Activated CD8-positive, alpha-beta T cell treated with anti-CD3 and anti-CD28 coated beads for 36 hours (primary cell): ENCODE measurements at regions of chr15 and their contacts with region 1.

Region 1: DNA sequence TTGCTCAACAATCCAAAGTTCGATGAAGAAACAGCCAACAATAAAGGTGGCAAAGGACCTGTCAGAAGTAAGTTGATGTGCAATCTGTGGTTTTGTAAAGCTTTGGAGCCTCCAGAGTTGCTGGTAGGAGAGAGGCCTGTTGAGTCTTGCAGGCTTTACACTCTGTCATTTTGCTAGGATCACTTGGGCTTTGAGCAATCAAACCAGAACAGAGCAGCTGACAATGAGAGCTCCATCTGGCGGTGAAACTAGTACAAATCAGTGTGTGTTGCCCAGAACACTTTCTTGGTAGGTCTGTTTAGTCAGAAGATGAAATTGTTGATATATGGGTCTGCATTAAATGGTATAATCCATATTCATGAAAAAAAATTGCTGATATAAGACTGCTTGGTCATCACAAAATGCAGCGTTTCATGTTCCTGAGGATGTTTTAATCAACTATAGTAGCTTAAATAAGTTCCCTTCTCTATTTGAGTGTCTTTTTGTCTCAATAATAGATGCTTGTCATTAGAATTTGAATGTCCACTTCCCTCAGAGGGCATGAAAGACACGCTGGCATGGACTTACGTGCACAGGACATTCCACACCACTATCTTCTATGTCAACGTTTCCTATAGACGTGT is 25.7 kb downstream of the TMOD2 start:
- DNase-seq: peak; percentile 77
- ATAC-seq: peak; percentile 77
- H3K4me3 Mint-ChIP-seq: no peak overlapping the region
- H3K27ac Mint-ChIP-seq: no peak overlapping the region
- H3K4me1 Mint-ChIP-seq: peaks cover 6% of the 10 kb centered on the region
- H3K27me3 Mint-ChIP-seq: no peaks in the 10 kb centered on the region
- CTCF ChIP-seq: peak; percentile 64

Region 2: DNA sequence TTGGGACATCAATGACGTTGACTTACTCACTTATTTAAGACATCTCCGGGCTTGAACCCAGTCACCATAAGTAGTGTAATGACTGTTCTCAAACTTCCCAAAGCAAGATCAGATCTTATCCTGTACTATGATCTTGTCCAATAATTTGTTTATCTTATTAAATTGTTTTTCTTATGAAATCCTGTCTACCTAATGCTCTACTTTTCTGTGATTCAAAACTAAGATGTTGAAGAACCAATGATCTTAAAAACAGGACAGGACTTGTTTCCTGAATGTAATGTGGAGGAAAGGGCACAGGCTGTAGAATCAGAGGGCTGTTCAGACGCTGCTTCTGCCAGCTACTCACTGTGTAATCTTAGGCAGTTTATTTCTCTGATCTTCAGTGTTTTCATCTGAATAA is 134.4 kb before region 1 on chr15:
- CTCF ChIA-PET with region 1: interaction called, 28 read pairs
- POLR2A ChIA-PET with region 1: no interaction called
- intact Hi-C with region 1: no loop called
- DNase-seq: no peak
- ATAC-seq: no peak
- H3K4me3 Mint-ChIP-seq: no peak overlapping the region
- H3K27ac Mint-ChIP-seq: no peak overlapping the region
- H3K4me1 Mint-ChIP-seq: no peaks in the 10 kb centered on the region
- H3K27me3 Mint-ChIP-seq: no peaks in the 10 kb centered on the region
- CTCF ChIP-seq: no peak

Region 3: DNA sequence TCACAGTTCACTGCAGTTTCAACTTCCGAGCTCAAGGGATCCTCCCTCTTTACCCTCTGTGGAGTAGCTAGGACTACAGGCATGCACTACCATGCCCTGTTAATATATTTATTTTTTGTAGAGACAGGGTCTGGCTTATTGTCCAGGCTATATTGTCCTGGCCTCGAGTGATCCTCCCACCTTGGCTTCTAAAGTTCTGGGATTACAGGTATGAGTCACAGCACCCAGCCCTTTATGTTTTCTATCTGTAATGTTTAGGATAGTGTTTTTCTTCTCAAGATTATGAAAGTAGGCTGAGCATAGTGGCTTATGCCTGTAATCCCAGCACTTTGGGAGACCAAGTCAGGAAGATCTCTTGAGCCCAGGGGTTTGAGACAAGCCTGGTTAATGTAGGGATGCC is 107.7 kb before region 1 on chr15:
- CTCF ChIA-PET with region 1: interaction called, 12 read pairs
- POLR2A ChIA-PET with region 1: interaction called, 3 read pairs
- intact Hi-C with region 1: no loop called
- DNase-seq: no peak
- ATAC-seq: no peak
- H3K4me3 Mint-ChIP-seq: no peak overlapping the region
- H3K27ac Mint-ChIP-seq: no peak overlapping the region
- H3K4me1 Mint-ChIP-seq: no peaks in the 10 kb centered on the region
- H3K27me3 Mint-ChIP-seq: peaks cover 16% of the 10 kb centered on the region
- CTCF ChIP-seq: no peak

Region 4: DNA sequence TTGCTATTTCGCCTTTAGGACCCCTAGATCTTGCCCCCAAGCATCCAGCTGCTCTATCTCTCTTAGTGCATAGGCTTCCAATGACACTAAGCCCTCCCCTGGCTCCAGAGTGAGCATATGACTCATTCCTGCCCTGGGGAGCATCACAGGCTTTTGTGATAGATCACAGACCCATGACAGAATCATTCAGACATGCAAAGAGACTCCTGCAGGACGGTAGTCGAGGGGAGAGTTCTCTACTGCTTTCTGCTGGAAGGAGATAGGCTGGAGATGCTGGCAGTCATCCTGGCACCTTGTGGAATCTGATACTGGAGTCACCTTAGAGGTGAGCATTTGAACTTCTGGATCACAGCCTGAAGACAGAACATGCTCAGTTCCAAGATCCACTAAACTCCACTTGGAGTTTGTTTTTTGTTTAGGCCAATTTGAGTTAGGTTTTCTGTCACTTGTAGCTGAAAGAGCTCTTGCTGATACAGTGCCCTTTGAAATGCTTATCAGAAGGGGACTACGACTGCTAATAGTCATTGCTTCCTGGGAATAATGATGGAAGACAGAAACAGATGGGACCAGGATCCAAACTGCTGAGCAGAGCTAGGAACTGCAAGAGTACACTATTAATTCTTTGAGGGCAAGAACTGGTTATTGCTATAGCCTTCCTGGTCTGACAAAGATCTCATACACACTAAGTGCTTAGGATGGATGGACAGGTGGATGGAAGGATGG is 50.6 kb before region 1 on chr15:
- CTCF ChIA-PET with region 1: interaction called, 92 read pairs
- POLR2A ChIA-PET with region 1: no interaction called
- intact Hi-C with region 1: no loop called
- DNase-seq: peak; percentile 71
- ATAC-seq: peak; percentile 89
- H3K4me3 Mint-ChIP-seq: no peak overlapping the region
- H3K27ac Mint-ChIP-seq: peak overlapping the region; percentile 45
- H3K4me1 Mint-ChIP-seq: peaks cover 67% of the 10 kb centered on the region
- H3K27me3 Mint-ChIP-seq: no peaks in the 10 kb centered on the region
- CTCF ChIP-seq: no peak

Region 5: GRCh38 chr15:51829360-51830275 is 52.6 kb after region 1 on chr15 and contains the start of gene TMOD3:
- CTCF ChIA-PET with region 1: interaction called, 17 read pairs
- POLR2A ChIA-PET with region 1: no interaction called
- intact Hi-C with region 1: loop called (anchors 5 kb)
- DNase-seq: peak; percentile 92
- ATAC-seq: peak; percentile 87
- H3K4me3 Mint-ChIP-seq: peak within 1 kb of the TSS; percentile 94
- H3K27ac Mint-ChIP-seq: peak within 1 kb of the TSS; percentile 91
- H3K4me1 Mint-ChIP-seq: peaks cover 33% of the 10 kb centered on the region
- H3K27me3 Mint-ChIP-seq: no peaks in the 10 kb centered on the region
- CTCF ChIP-seq: no peak
- total RNA-seq, gene TMOD3: 53.6 to 59.2 TPM

Region 6: GRCh38 chr15:52050416-52050815 is 273.4 kb after region 1 on chr15:
- CTCF ChIA-PET with region 1: no interaction called
- POLR2A ChIA-PET with region 1: no interaction called
- intact Hi-C with region 1: no loop called
- DNase-seq: no peak
- ATAC-seq: no peak
- H3K4me3 Mint-ChIP-seq: no peak overlapping the region
- H3K27ac Mint-ChIP-seq: no peak overlapping the region
- H3K4me1 Mint-ChIP-seq: peaks cover 19% of the 10 kb centered on the region
- H3K27me3 Mint-ChIP-seq: no peaks in the 10 kb centered on the region
- CTCF ChIP-seq: no peak